ENCODE measurements at regions of chr1 and their contacts with region 1.

Region 1: GRCh38 chr1:94316836-94317789 is 79.7 kb upstream of the ARHGAP29 start:
- DNase-seq: peak; percentile 92

Region 2: GRCh38 chr1:93878889-93879586 is 438.1 kb before region 1 on chr1 and contains the start of gene DNTTIP2:
- in situ Hi-C with region 1: no loop called
- DNase-seq: peak; percentile 90

Region 3: GRCh38 chr1:94061513-94062443 is 255.3 kb before region 1 on chr1:
- in situ Hi-C with region 1: no loop called
- DNase-seq: peak; percentile 66

Region 4: DNA sequence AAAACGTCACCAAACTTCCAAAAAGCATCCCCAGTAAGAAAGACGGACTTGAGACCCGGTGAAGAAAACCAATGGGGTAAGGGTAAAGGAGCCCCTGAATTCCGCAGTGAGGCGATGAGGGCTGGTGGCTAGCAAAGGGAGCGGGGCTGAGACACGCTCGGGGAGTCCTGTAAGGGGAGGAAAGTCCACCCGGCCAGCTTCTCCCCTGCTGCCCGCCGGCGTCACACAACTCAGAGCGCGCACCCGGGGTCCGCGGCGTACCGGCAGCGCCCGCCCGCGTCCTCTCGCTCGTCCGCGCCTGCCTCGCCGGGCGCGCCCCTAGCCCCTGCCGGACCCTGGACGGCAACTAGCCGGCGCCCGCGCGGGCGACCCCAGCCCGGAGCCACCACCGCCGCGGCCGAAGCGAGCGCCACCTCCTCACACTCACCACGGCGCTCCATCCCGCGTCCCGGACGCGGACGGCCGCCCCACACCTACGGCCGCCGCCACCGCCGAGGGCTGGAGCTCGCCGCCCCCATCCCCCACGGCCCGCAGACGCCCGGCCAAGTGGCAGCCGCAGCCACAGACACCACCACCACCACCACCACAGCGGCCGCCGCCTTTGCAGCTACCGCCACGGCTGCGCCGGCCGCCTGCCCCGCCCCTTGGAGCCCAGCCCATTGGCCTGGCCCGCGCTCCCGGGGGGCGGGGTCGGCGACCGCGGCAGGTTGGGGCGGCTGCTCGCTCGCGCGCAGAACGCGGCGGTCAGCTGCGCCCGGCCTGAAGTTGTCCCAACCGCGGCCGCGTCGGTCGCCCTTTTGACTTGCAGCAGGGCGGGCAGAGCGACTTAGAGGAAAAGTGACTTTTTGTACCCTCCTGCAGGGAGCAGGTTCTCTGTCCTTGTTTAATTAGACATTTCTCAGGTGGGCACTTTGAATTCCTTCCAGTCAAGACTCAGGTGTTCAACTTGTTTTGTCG is 69.7 kb before region 1 on chr1:
- in situ Hi-C with region 1: loop called (anchors 10 kb)
- DNase-seq: peak; percentile 79

Region 5: DNA sequence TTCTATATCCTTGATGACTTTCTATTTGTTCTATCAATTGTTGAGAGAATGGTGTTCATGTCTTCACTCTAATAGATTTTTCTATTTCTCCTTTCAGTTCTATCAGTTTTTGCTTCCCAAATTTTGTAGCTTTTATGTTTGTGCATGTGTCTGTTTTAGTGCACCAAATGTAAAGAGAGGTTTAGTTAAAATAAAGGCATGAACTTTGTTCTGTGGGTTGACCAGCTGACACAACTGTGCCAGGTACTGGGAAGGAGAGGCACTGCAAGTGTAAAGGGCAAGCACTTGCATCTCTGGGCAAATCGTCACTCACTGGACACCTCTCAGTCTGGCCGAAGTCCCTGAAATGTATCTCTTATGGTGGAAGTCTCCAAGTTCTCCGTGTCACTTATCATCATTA is 62.5 kb after region 1 on chr1:
- in situ Hi-C with region 1: no loop called
- DNase-seq: no peak

Measured in ACHN (cell line).